ENCODE measurements at regions of chr22 and their contacts with region 1.

Region 1: GRCh38 chr22:36775964-36776669 is at the start of gene IFT27:
- DNase-seq: peak; percentile 100
- H3K4me3 ChIP-seq: peak within 1 kb of the TSS; percentile 72 to 85 (median 80)
- H3K27ac ChIP-seq: peak within 1 kb of the TSS; percentile 42
- H3K4me1 ChIP-seq: peaks cover 11% of the 10 kb centered on the region
- H3K27me3 ChIP-seq: no peaks in the 10 kb centered on the region
- CTCF ChIP-seq: no peak
- total RNA-seq, gene IFT27: 13.7 to 22.3 TPM

Region 2: GRCh38 chr22:36606114-36606513 is 170.0 kb before region 1 on chr22:
- CTCF ChIA-PET with region 1: interaction called, 15 read pairs
- dilution Hi-C with region 1: no loop called
- in situ Hi-C with region 1: no loop called
- intact Hi-C with region 1: no loop called
- DNase-seq: no peak
- H3K4me3 ChIP-seq: no peak overlapping the region
- H3K27ac ChIP-seq: no peak overlapping the region
- H3K4me1 ChIP-seq: no peaks in the 10 kb centered on the region
- H3K27me3 ChIP-seq: peaks cover 11% of the 10 kb centered on the region
- CTCF ChIP-seq: no peak

Region 3: GRCh38 chr22:36724836-36725235 is 51.3 kb before region 1 on chr22:
- CTCF ChIA-PET with region 1: no interaction called
- dilution Hi-C with region 1: loop called (anchors 5 kb)
- in situ Hi-C with region 1: no loop called
- intact Hi-C with region 1: no loop called
- DNase-seq: no peak
- H3K4me3 ChIP-seq: no peak overlapping the region
- H3K27ac ChIP-seq: no peak overlapping the region
- H3K4me1 ChIP-seq: no peaks in the 10 kb centered on the region
- H3K27me3 ChIP-seq: no peaks in the 10 kb centered on the region
- CTCF ChIP-seq: no peak

Region 4: GRCh38 chr22:36829370-36830002 is 53.4 kb after region 1 on chr22:
- CTCF ChIA-PET with region 1: no interaction called
- dilution Hi-C with region 1: loop called (anchors 5 kb)
- in situ Hi-C with region 1: no loop called
- intact Hi-C with region 1: no loop called
- DNase-seq: no peak
- H3K4me3 ChIP-seq: no peak overlapping the region
- H3K27ac ChIP-seq: no peak overlapping the region
- H3K4me1 ChIP-seq: no peaks in the 10 kb centered on the region
- H3K27me3 ChIP-seq: peaks cover 2% of the 10 kb centered on the region
- CTCF ChIP-seq: peak in 1 of 2 donors; percentile 2

Region 5: GRCh38 chr22:36873680-36874537 is 97.8 kb after region 1 on chr22:
- CTCF ChIA-PET with region 1: no interaction called
- dilution Hi-C with region 1: no loop called
- in situ Hi-C with region 1: no loop called
- intact Hi-C with region 1: no loop called
- DNase-seq: peak; percentile 88
- H3K4me3 ChIP-seq: no peak overlapping the region
- H3K27ac ChIP-seq: peak overlapping the region; percentile 64
- H3K4me1 ChIP-seq: peaks cover 42% of the 10 kb centered on the region
- H3K27me3 ChIP-seq: no peaks in the 10 kb centered on the region
- CTCF ChIP-seq: peak; percentile 63 to 72

Measured in mammary epithelial cell (primary cell).